ENCODE measurements at regions of chr3 and their contacts with region 1.

Region 1: GRCh38 chr3:165854696-165855095 is 17.5 kb upstream of the BCHE start:
- DNase-seq: peak; percentile 50
- H3K4me3 Mint-ChIP-seq: no peak overlapping the region
- H3K27ac Mint-ChIP-seq: peak overlapping the region; percentile 3
- H3K4me1 Mint-ChIP-seq: peaks cover 25% of the 10 kb centered on the region
- H3K27me3 Mint-ChIP-seq: no peaks in the 10 kb centered on the region
- CTCF ChIP-seq: peak; percentile 41

Region 2: DNA sequence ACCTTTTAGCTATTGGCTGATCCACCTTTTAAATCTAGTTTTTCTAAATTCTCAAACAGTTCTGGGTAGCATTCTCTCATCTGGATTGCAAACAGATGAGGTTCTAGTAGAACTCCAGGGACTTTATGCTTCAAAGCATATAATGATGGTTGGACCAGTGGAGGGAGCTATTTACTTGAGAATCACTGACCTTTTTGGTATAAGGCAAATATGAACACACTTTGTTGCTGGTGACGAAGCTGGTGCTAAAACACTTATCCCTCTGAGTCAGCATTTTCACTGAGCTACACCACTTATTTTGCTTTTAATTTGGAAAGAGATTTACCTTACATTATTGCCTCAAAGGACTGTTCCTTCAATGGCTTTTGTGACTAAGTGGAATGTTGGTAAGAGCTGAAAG is 599.9 kb before region 1 on chr3:
- CTCF ChIA-PET with region 1: interaction called, 3 read pairs
- POLR2A ChIA-PET with region 1: no interaction called
- intact Hi-C with region 1: loop called (anchors 2 kb)
- DNase-seq: peak; percentile 80
- H3K4me3 Mint-ChIP-seq: no peak overlapping the region
- H3K27ac Mint-ChIP-seq: peak overlapping the region; percentile 25
- H3K4me1 Mint-ChIP-seq: peaks cover 10% of the 10 kb centered on the region
- H3K27me3 Mint-ChIP-seq: no peaks in the 10 kb centered on the region
- CTCF ChIP-seq: peak; percentile 71

Region 3: DNA sequence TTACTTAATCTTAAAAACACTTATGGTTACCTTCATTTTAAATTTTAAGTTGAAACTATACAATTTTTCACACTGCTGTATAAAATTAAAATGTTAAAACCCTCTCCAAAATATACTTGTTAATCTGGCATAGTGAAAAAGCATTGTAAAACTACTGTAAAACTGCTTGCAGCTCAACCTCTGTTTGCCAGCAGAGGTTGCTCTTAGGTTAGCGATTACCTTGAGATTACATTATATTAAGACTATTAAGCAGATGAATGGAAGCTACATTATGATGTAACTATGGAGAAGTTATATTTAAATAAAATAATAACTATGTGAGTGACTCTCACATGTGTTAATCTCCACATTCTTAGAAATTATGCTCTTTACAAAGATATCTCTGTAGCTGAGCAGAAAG is 514.9 kb before region 1 on chr3:
- CTCF ChIA-PET with region 1: interaction called, 3 read pairs
- POLR2A ChIA-PET with region 1: no interaction called
- intact Hi-C with region 1: loop called (anchors 2 kb)
- DNase-seq: peak; percentile 45
- H3K4me3 Mint-ChIP-seq: no peak overlapping the region
- H3K27ac Mint-ChIP-seq: no peak overlapping the region
- H3K4me1 Mint-ChIP-seq: no peaks in the 10 kb centered on the region
- H3K27me3 Mint-ChIP-seq: no peaks in the 10 kb centered on the region
- CTCF ChIP-seq: peak; percentile 53

Region 4: GRCh38 chr3:165874663-165875489 is 20.2 kb after region 1 on chr3:
- CTCF ChIA-PET with region 1: interaction called, 15 read pairs
- POLR2A ChIA-PET with region 1: no interaction called
- intact Hi-C with region 1: no loop called
- DNase-seq: no peak
- H3K4me3 Mint-ChIP-seq: no peak overlapping the region
- H3K27ac Mint-ChIP-seq: no peak overlapping the region
- H3K4me1 Mint-ChIP-seq: no peaks in the 10 kb centered on the region
- H3K27me3 Mint-ChIP-seq: no peaks in the 10 kb centered on the region
- CTCF ChIP-seq: no peak

Region 5: DNA sequence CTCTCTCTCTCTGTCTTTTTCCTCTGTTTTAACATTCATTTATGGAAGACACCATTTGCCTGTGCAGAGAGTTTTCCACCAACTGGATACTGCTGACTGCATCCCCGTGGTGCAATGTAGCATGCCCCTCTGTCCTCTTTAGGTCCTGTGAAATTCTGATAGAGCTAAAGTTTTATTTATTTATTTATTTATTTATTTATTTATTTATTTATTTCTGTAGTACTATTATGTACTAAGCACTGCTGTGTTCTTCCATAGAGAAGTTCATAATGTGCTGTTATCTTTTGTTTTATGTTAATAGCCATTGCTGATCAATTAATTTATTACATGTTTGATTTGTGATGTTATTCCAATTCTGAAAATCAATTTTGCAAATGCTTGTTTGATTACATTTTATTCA is 775.5 kb after region 1 on chr3:
- CTCF ChIA-PET with region 1: no interaction called
- POLR2A ChIA-PET with region 1: no interaction called
- intact Hi-C with region 1: no loop called
- DNase-seq: no peak
- H3K4me3 Mint-ChIP-seq: no peak overlapping the region
- H3K27ac Mint-ChIP-seq: no peak overlapping the region
- H3K4me1 Mint-ChIP-seq: no peaks in the 10 kb centered on the region
- H3K27me3 Mint-ChIP-seq: no peaks in the 10 kb centered on the region
- CTCF ChIP-seq: no peak

Region 6: GRCh38 chr3:167350245-167350862 is 1495.7 kb after region 1 on chr3:
- CTCF ChIA-PET with region 1: interaction called, 3 read pairs
- POLR2A ChIA-PET with region 1: no interaction called
- intact Hi-C with region 1: loop called (anchors 2 kb)
- DNase-seq: peak; percentile 64
- H3K4me3 Mint-ChIP-seq: no peak overlapping the region
- H3K27ac Mint-ChIP-seq: no peak overlapping the region
- H3K4me1 Mint-ChIP-seq: no peaks in the 10 kb centered on the region
- H3K27me3 Mint-ChIP-seq: no peaks in the 10 kb centered on the region
- CTCF ChIP-seq: peak; percentile 76